ENCODE measurements at regions of chr1 and their contacts with region 1.

Region 1: DNA sequence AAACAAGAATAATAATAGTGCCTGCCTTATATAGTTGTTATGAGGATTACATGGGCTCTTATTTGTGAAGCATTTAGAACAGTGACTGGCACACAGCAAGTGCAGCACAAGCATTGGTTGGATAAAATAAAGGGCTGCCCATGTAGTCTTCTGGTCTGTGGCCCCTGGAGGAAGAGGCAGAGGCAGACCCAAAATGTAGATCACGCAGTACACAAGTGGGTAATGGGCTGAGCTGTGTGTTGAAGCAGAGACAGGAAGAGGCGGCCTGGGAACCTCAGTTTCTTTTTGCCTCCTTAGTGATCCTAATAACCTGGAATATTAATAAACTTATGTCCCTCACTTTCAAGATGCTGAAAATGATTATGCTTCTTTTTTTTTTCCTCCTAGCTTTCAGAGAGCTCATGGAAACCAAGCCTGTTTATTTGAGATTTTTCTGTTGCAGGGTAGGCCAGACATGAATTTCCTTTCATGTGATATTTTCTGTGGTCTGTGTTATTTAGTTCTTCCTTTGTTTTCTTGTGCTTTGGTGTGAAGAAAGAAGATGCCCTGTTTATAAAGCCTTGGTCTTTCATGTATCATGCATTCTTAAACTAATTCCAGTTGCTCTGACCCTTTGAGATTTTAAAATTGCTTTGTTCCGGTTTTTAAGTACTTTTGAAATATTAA is 42.5 kb downstream of the LRRC8D start:
- DNase-seq: no peak
- H3K4me3 ChIP-seq: peak overlapping the region in 1 of 7 experiments; percentile 8
- H3K27ac ChIP-seq: peak overlapping the region in 1 of 2 experiments; percentile 22
- H3K4me1 ChIP-seq: peaks cover 0 to 33% (median 8%) of the 10 kb centered on the region in 4 experiments
- H3K27me3 ChIP-seq: no peaks in the 10 kb centered on the region

Region 2: GRCh38 chr1:89706700-89707012 is 156.6 kb before region 1 on chr1:
- CTCF ChIA-PET with region 1: no interaction called
- POLR2A ChIA-PET with region 1: no interaction called
- DNase-seq: peak; percentile 25 to 76 (median 75)
- H3K4me3 ChIP-seq: no peak overlapping the region
- H3K27ac ChIP-seq: no peak overlapping the region
- H3K4me1 ChIP-seq: peaks cover 0 to 31% (median 11%) of the 10 kb centered on the region in 4 experiments
- H3K27me3 ChIP-seq: no peaks in the 10 kb centered on the region

Region 3: GRCh38 chr1:89873770-89874169 is 10.5 kb after region 1 on chr1:
- CTCF ChIA-PET with region 1: interaction called, 25 read pairs
- POLR2A ChIA-PET with region 1: interaction called, 3 read pairs
- DNase-seq: peak; percentile 79 to 89 (median 81)
- H3K4me3 ChIP-seq: peak overlapping the region in 2 of 7 experiments; percentile 8 to 26
- H3K27ac ChIP-seq: peak overlapping the region; percentile 78 to 80
- H3K4me1 ChIP-seq: peaks cover 13 to 42% (median 21%) of the 10 kb centered on the region in 4 experiments
- H3K27me3 ChIP-seq: no peaks in the 10 kb centered on the region

Region 4: DNA sequence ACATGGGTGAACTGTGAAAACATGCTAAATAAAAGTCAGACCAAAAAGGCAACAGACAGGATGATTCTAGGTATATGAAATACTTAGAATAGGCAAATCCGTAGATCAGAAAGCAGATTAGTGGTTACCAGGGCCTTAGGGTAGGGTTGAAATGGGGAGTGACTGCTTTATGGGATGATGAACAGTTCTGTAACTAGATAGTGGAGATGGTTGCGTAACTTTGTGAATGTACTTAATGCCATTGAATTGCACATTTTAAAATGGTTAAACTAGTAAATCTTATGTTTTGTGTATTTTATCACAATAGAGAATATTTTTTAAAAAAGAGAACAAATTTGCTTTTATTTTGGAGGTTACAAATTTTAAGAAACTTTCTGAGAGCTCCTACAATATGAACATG is 149.0 kb after region 1 on chr1:
- CTCF ChIA-PET with region 1: no interaction called
- POLR2A ChIA-PET with region 1: no interaction called
- DNase-seq: no peak
- H3K4me3 ChIP-seq: no peak overlapping the region
- H3K27ac ChIP-seq: no peak overlapping the region
- H3K4me1 ChIP-seq: no peaks in the 10 kb centered on the region
- H3K27me3 ChIP-seq: no peaks in the 10 kb centered on the region